ENCODE measurements at regions of chr15 and their contacts with region 1.

Region 1: DNA sequence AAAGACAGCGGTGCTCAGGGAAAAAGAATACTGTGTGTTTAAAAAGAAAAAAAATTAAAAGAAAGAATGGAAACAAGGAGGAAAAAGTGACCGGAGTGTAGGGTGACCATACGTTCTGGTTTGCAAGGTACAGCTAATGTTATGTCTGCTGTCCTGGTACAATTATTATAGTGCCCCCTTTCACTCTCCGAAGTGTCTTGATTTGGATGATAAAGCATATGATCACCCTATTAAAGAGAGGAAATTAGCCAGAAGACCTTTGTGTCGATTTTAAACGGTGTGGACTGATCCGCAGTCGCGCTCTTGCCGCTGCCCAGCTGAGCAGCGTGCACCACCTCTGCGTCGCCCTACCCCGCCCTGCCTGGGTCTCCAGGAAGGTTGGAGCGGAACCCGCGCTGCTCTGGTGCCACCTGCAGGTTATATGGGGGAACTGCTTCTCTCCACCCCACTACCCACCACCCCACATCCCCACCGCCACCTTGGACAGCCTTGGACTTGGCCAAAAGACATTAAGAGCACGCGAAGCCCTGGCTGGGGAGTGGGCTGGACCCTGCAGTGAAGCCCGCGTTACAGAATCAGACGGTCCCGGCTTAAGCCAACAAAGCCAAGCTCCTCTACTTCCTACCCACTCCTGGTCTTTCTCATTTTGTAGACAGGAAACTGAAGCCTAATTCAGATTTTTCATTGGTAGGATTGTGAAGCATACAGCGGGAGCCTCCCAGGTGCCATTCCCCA is 41.2 kb upstream of the UBE2Q2 start:
- DNase-seq: no peak
- H3K4me3 ChIP-seq: peak overlapping the region; percentile 28 to 50 (median 31)
- H3K27ac ChIP-seq: no peak overlapping the region
- H3K4me1 ChIP-seq: peaks cover 8 to 9% (median 9%) of the 10 kb centered on the region in 4 donors
- H3K27me3 ChIP-seq: peaks cover 0 to 38% (median 0%) of the 10 kb centered on the region in 4 donors
- CTCF ChIP-seq: peak in 2 of 3 experiments; percentile 84 to 97
- EP300 ChIP-seq: no peak
- POLR2A ChIP-seq: no peak

Region 2: DNA sequence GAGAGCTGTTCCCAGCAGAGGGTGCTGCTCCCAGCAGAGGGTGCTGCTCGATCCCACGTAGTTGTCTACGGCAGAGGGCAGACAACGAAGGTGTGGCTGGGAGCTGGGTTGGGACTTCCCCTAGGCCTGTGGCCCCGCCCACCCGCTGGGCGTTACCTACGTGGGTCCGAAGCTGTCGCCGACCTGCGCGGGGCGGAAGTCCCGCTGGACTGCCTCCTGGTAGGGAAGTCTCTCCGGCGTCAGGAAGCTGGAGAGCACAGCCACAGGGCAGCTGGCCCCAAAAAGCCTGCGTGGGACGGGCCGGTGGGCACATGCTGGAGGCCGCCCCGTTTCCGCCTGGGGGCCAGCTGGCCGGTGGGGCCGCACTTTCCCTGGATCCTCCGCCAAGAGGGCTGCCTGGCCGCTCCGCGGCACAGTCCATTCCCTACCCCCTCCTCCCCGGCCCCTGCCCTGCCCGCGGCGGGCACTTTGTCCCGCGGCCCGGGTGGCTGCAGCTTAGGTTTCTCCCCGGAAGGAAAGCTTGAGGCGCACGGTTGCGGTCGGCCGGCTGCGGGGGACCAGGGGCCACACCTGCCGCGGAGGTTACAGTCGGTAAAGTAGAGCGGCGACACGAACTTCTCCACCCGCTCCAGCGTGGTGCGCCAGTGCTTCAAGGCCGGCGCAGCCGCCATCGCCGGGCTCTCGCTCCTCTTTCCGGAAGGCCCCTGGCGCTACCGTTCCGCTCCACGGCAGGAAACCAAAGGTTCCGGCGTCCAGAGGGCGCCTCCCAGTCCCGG is 433.9 kb before region 1 on chr15 and contains the start of gene MAN2C1:
- intact Hi-C with region 1: loop called (anchors 5 kb)
- DNase-seq: peak; percentile 98
- H3K4me3 ChIP-seq: peak within 1 kb of the TSS; percentile 69 to 83 (median 80)
- H3K27ac ChIP-seq: peak within 1 kb of the TSS; percentile 89 to 100 (median 96)
- H3K4me1 ChIP-seq: peaks cover 20 to 29% (median 21%) of the 10 kb centered on the region in 4 donors
- H3K27me3 ChIP-seq: no peaks in the 10 kb centered on the region
- CTCF ChIP-seq: peak; percentile 73 to 86 (median 79)
- EP300 ChIP-seq: no peak
- POLR2A ChIP-seq: no peak
- total RNA-seq, gene MAN2C1: 67.4 to 163 (median 125) TPM

Region 3: GRCh38 chr15:75431682-75432081 is 370.3 kb before region 1 on chr15:
- intact Hi-C with region 1: no loop called
- DNase-seq: no peak
- H3K4me3 ChIP-seq: no peak overlapping the region
- H3K27ac ChIP-seq: no peak overlapping the region
- H3K4me1 ChIP-seq: peaks cover 0 to 16% (median 6%) of the 10 kb centered on the region in 4 donors
- H3K27me3 ChIP-seq: no peaks in the 10 kb centered on the region
- CTCF ChIP-seq: no peak
- EP300 ChIP-seq: no peak
- POLR2A ChIP-seq: no peak

Region 4: DNA sequence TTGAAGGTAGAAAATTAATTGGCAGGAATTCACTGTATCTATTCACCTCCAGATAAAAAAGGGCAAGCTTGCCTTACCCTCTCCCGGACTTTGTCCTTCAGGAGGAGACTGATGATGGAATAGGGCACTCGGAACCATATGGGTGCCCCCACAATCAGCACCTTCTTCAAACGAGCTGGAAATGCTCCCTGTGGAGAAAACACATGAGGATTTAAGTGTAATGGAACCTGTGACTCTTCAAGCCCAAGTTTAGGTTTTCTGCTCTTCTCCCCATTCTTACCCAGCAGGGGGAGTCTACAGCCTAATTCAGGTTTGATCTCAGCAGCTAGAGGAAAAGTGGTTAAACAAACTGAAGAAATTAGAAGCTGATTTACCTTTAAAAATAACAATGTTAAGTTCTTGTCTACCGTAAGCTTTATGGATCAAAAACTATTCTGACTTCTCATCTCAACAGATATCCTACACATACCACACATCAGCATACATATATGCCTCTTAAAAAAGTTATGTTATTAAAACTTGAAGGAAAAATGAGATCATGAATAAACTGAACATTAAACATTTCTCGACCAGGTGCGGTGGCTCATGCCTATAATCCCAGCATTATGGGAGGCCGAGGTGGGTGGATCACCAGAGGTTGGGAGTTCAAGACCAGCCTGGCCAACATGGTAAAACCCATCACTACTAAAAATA is 293.0 kb before region 1 on chr15:
- intact Hi-C with region 1: loop called (anchors 5 kb)
- DNase-seq: no peak
- H3K4me3 ChIP-seq: no peak overlapping the region
- H3K27ac ChIP-seq: no peak overlapping the region
- H3K4me1 ChIP-seq: peaks cover 0 to 4% (median 0%) of the 10 kb centered on the region in 4 donors
- H3K27me3 ChIP-seq: no peaks in the 10 kb centered on the region
- CTCF ChIP-seq: peak; percentile 44 to 60 (median 46)
- EP300 ChIP-seq: no peak
- POLR2A ChIP-seq: no peak

Region 5: DNA sequence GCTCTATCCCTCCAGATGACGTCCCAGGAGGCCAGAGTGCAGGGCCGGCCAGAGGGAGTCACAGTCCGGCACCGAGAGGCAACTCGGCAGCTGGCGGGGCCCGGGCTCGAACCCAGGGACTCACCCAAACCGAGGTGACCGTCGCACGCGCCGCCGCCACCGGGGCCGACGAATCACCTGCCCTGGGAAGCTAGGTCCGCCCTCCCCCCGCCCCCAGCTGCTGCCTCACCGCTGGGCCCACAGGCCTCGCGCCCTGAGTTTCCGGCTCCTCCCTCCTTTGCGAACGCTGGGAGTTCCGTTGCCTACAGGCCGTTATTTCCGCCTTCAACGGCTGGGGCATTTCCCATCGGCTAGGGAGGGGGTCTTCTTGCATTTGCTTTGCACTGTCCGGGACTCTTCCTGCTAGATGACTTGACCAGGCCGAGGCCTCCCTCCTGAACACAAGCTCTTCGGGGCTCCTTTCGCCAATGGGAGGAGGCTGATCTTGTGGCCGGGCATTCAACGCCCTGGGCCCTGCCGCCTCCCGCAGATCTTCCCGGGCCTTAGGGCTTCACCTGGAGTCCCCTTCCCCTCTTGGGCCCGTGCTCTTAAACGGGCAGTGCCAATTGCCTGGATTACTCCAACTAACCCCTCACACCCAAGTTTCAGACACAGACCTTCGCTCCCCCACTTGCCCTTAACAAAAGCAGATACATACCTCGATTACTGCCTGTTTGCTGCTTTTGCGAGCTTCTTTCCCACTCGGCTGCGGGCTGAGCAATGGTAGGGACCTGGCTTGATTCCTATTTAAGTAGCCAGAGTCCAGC is 176.3 kb before region 1 on chr15 and contains the start of gene SNUPN:
- intact Hi-C with region 1: loop called (anchors 10 kb)
- DNase-seq: peak; percentile 98
- H3K4me3 ChIP-seq: peak within 1 kb of the TSS; percentile 79 to 95 (median 92)
- H3K27ac ChIP-seq: peak within 1 kb of the TSS; percentile 91 to 96 (median 96)
- H3K4me1 ChIP-seq: peaks cover 15 to 40% (median 25%) of the 10 kb centered on the region in 4 donors
- H3K27me3 ChIP-seq: no peaks in the 10 kb centered on the region
- CTCF ChIP-seq: peak in 1 of 3 experiments; percentile 20
- EP300 ChIP-seq: no peak
- POLR2A ChIP-seq: no peak
- total RNA-seq, gene SNUPN: 16.6 to 23.4 (median 18.8) TPM

Region 6: DNA sequence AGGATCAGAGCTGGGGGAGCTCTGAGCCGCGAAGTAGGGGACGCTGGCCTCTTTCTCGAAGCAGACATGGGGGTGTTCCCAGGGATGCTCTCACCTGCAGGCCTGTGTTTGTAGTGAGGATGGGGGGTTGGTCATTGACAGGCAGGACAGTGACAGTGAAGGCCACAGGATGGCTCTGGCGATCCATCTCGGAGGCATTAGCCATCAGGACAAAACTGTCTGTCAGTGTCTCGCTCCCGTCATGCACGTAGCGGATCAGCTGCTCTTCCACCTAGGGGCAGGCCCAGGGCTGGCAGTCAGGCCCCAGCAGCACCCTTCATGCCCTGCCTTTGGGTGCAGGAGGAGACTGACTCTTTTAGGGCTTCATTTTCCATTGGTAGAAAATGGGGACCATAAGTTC is 117.4 kb before region 1 on chr15:
- intact Hi-C with region 1: loop called (anchors 5 kb)
- DNase-seq: no peak
- H3K4me3 ChIP-seq: no peak overlapping the region
- H3K27ac ChIP-seq: peak overlapping the region in 2 of 4 donors; percentile 38 to 70
- H3K4me1 ChIP-seq: peaks cover 7 to 50% (median 36%) of the 10 kb centered on the region in 4 donors
- H3K27me3 ChIP-seq: no peaks in the 10 kb centered on the region
- CTCF ChIP-seq: no peak
- EP300 ChIP-seq: no peak
- POLR2A ChIP-seq: no peak

Region 7: GRCh38 chr15:75732809-75733451 is 69.1 kb before region 1 on chr15:
- intact Hi-C with region 1: loop called (anchors 5 kb)
- DNase-seq: no peak
- H3K4me3 ChIP-seq: peak overlapping the region in 1 of 4 donors; percentile 5
- H3K27ac ChIP-seq: peak overlapping the region; percentile 29 to 63 (median 52)
- H3K4me1 ChIP-seq: peaks cover 22 to 46% (median 39%) of the 10 kb centered on the region in 4 donors
- H3K27me3 ChIP-seq: no peaks in the 10 kb centered on the region
- CTCF ChIP-seq: peak; percentile 89 to 98 (median 95)
- EP300 ChIP-seq: no peak
- POLR2A ChIP-seq: no peak

Region 8: DNA sequence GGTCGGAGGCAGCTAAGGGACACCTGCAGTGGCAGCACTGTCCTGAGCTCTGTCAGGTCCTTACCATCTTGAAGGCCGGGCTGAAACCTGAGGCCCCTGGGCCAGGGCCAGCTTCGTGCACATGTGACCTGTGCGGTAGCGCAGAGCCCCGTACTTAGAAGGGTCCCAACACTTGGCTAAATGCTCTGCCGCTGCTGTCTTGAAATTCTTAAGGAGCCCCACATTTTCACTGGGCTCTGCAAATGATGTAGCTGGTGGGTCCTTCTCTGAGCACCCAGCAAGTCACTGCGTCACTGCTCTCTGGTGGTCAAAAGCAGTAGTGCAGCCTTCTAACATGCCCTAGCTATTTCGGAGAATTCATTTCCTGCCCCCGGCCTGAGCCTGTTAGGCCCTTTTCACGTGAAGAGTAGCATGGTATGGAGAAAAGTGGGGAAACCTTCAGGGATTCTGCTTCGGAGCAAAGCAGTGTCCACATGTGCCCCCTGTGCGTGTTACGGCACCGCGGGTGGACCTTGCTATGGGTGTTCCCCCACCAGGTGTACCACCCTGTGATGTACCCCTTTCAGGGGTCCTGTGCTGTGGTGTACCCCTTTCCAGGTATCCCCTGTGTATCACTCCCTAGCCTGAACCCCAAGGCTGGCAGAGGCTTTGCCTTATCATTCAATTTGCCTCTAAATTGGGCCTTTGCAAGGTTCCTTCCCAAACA is 337.5 kb after region 1 on chr15:
- intact Hi-C with region 1: loop called (anchors 10 kb)
- DNase-seq: no peak
- H3K4me3 ChIP-seq: peak overlapping the region in 3 of 4 donors; percentile 2 to 23 (median 20)
- H3K27ac ChIP-seq: no peak overlapping the region
- H3K4me1 ChIP-seq: peaks cover 8 to 15% (median 13%) of the 10 kb centered on the region in 4 donors
- H3K27me3 ChIP-seq: peaks cover 0 to 21% (median 0%) of the 10 kb centered on the region in 4 donors
- CTCF ChIP-seq: peak; percentile 84 to 95 (median 85)
- EP300 ChIP-seq: no peak
- POLR2A ChIP-seq: no peak